ENCODE measurements at regions of chr6 and their contacts with region 1.

Region 1: GRCh38 chr6:73675466-73676098 is 20.4 kb upstream of the CD109 start:
- DNase-seq: peak in 1 of 2 donors; percentile 88
- H3K4me3 ChIP-seq: no peak overlapping the region
- H3K27ac ChIP-seq: no peak overlapping the region
- H3K4me1 ChIP-seq: peaks cover 0 to 2% of the 10 kb centered on the region in 2 donors
- H3K27me3 ChIP-seq: no peaks in the 10 kb centered on the region
- CTCF ChIP-seq: peak; percentile 59 to 94 (median 79)

Region 2: GRCh38 chr6:73695619-73696421 is 20.2 kb after region 1 on chr6 and contains the start of gene CD109:
- intact Hi-C with region 1: loop called (anchors 1 kb)
- DNase-seq: peak in 1 of 2 donors; percentile 66
- H3K4me3 ChIP-seq: peak within 1 kb of the TSS; percentile 67 to 69
- H3K27ac ChIP-seq: peak within 1 kb of the TSS; percentile 83 to 86
- H3K4me1 ChIP-seq: peaks cover 5 to 12% of the 10 kb centered on the region in 2 donors
- H3K27me3 ChIP-seq: no peaks in the 10 kb centered on the region
- CTCF ChIP-seq: no peak
- total RNA-seq, gene CD109: 17.6 TPM

Region 3: GRCh38 chr6:73732845-73733675 is 57.5 kb after region 1 on chr6:
- intact Hi-C with region 1: loop called (anchors 1 kb)
- DNase-seq: peak in 1 of 2 donors; percentile 78
- H3K4me3 ChIP-seq: no peak overlapping the region
- H3K27ac ChIP-seq: no peak overlapping the region
- H3K4me1 ChIP-seq: no peaks in the 10 kb centered on the region
- H3K27me3 ChIP-seq: no peaks in the 10 kb centered on the region
- CTCF ChIP-seq: peak; percentile 71 to 90 (median 90)